ENCODE measurements at regions of chr16 and their contacts with region 1.

Region 1: DNA sequence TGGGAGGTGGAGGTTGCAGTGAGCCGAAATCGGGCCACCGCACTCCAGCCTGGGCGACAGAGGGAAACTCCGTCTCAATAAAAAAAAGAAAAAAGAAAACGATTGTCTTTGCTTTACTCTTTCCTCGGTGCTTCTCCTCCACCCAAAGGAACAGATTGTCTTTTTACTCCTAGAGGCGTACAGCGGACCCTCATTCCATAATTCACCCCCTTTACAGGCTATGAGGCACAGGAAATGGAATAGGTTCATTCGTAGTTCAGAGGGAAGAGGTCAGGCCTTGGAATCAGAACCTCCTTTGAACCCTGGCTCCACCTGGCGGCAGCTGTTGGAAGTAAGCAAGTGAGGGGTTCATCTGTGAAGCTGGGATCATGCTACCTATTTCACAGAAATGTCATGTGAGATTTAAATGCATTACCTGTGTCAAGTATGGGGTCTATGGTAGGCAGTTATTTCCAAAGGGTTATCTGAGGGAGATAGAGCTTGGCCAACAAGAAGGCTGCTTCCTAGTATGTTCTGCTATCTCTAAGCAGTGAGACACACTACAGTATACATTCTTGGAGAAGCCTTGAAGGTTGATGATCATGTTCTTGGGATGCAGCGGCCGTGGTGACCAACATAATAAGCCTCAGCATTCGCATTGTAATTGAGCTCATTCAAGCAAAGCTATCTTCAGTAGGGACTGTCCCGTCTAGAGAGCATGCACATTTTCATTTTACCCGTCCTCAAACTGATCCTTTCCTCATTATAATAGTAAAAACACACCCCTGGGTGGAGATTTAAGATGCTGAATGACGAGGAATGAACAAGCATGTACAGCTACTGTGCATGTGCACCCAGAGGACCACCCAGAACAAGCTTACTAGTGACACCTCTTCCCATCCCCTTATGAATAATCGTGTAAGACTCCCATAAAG is 18.7 kb upstream of the ZNF689 start:
- DNase-seq: peak in 1 of 2 experiments; percentile 98
- H3K4me3 ChIP-seq: no peak overlapping the region
- H3K27ac ChIP-seq: no peak overlapping the region
- H3K4me1 ChIP-seq: no peaks in the 10 kb centered on the region
- H3K27me3 ChIP-seq: no peaks in the 10 kb centered on the region
- CTCF ChIP-seq: peak; percentile 82 to 94 (median 84)
- EP300 ChIP-seq: no peak
- POLR2A ChIP-seq: no peak
- RAD21 ChIP-seq: peak; percentile 69 to 76

Region 2: DNA sequence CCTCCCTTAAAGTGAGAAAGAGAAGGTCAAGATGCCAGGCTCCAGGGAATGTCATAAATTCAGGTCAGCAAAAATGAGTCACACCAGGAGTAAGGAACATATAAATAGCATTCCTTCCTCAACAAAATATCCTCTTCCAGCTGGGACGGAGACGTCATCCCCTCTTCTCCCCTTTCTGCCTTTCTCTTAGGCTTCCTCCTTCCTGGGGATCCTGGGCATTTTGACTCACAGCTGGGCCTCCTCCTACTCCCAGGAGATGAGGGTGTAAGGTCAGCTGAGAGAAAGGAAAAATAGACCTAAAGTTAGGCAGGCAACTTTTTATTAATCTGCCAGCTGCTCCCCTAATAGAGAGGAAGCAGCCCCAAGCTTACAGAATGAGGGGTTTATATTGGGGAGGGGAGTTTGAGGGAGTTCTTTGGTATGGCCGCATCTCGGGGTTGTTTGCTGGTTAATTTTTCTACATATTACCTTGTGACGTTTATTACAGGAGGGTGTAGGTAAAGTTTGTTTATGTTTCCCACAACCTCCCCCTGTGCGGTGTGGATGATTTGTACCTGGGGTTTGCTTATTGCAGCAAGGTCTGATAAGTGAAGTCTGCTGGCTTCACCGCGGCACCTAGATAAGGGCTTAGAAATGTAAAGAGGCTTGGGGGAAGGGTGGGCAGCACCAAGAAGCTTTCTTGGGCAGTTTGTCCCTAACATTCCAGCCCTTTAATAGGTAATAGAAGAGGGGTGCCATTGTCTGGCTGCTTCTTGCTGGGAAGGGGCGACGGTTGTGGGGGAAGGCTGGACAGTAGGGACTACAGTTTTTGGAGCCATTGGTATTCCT is 87.2 kb before region 1 on chr16:
- CTCF ChIA-PET with region 1: interaction called, 10 read pairs
- POLR2A ChIA-PET with region 1: no interaction called
- DNase-seq: no peak
- H3K4me3 ChIP-seq: peak overlapping the region in 1 of 4 experiments; percentile 30; a peak in 2 of 8 replicates
- H3K27ac ChIP-seq: 0 out of 2 replicates have a peak overlapping the region, but pooled peaks have one; percentile 31
- H3K4me1 ChIP-seq: peaks cover 5 to 22% (median 19%) of the 10 kb centered on the region in 4 experiments
- H3K27me3 ChIP-seq: no peaks in the 10 kb centered on the region
- CTCF ChIP-seq: no peak
- EP300 ChIP-seq: no peak
- POLR2A ChIP-seq: no peak
- RAD21 ChIP-seq: no peak

Region 3: DNA sequence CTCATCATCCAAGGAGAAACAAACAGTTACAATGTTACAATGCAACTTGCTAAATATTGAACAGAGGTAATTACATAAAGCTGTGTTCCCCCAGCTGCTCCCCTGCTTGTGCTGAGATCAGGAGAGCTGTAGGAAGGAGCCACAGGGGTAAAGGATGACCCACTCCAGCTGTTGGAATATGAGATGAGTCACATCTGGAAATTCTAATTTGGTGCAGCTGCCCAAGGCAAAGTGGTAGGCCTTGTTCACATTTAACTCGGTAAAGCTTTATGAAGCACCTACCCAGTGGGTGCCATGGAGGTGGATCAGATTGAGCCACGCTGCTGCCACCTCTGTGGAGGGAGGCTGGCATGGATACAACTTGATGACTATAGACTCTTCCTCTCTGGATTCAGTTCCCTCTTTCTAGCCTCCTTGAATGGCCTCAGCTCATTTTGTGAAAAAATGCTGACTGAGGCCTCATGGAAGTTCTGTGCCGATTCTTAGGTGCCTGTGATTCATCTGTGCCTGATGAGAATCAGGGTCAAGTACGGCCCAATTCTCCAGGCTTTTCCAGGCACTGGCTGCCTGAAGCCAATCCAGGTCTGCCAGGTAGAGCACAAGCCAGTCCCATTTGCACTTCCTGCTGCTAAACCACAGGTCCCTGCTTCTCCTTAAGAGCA is 26.1 kb before region 1 on chr16:
- CTCF ChIA-PET with region 1: interaction called, 21 read pairs
- POLR2A ChIA-PET with region 1: interaction called, 3 read pairs
- DNase-seq: no peak
- H3K4me3 ChIP-seq: no peak overlapping the region
- H3K27ac ChIP-seq: no peak overlapping the region
- H3K4me1 ChIP-seq: no peaks in the 10 kb centered on the region
- H3K27me3 ChIP-seq: no peaks in the 10 kb centered on the region
- CTCF ChIP-seq: no peak
- EP300 ChIP-seq: no peak
- POLR2A ChIP-seq: no peak
- RAD21 ChIP-seq: no peak

Region 4: DNA sequence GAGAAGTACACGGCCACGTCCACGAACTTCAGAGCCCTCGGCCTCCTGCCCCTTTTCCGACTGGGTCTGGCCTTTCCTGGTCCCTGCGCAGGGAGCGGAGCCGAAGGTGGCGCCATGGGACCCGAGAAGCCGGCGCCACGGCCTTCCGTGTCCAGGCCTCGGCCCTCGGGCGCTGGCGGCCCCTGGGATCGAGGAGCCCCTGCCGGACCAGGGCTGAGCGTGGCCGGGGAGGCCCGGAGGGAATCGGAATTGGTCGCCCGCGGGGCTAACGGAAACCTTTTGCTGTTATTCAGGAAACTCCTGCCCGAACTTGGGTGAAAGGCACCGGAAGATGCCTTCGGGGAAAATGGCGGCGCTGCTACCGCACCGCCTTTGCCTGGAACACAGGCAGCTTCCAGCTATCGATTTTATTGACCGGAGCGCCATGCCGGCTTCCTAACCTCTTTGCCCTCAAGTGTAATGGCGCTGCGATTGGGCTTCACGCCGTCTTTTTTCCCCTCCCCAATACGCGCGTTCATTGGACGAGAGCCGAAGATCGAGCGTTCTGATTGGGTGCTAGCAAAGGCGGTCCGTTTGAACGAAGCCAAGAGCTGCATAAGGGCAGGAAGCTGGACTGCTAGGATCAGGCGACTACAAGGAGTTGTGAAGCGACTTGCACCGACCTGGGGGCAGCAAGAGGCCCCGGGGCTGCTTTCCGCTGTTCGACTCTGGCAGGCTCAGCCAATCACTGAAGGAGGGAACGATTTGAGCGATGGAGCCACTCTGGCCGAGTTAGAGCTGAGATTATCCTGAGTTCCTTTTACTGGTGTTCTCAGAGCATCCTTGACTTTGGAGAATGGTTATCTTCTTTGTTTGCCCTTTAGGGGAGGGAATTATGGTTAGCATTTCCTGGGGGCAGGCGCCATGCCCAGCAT is 18.7 kb before region 1 on chr16 and contains the start of gene ZNF689:
- CTCF ChIA-PET with region 1: interaction called, 74 read pairs
- POLR2A ChIA-PET with region 1: interaction called, 7 read pairs
- DNase-seq: peak; percentile 98 to 99
- H3K4me3 ChIP-seq: peak within 1 kb of the TSS; percentile 88 to 98 (median 92)
- H3K27ac ChIP-seq: peak within 1 kb of the TSS; percentile 95
- H3K4me1 ChIP-seq: peaks cover 0 to 3% (median 2%) of the 10 kb centered on the region in 4 experiments; a peak in 3 of 7 replicates
- H3K27me3 ChIP-seq: no peaks in the 10 kb centered on the region
- CTCF ChIP-seq: no peak
- EP300 ChIP-seq: no peak
- POLR2A ChIP-seq: peak; percentile 78 to 86
- RAD21 ChIP-seq: 0 out of 4 replicates have a peak, but pooled peaks of 1 of the 2 experiments have one; percentile 1
- total RNA-seq, gene ZNF689: 14.2 and 14.3 TPM in 2 replicates

Region 5: DNA sequence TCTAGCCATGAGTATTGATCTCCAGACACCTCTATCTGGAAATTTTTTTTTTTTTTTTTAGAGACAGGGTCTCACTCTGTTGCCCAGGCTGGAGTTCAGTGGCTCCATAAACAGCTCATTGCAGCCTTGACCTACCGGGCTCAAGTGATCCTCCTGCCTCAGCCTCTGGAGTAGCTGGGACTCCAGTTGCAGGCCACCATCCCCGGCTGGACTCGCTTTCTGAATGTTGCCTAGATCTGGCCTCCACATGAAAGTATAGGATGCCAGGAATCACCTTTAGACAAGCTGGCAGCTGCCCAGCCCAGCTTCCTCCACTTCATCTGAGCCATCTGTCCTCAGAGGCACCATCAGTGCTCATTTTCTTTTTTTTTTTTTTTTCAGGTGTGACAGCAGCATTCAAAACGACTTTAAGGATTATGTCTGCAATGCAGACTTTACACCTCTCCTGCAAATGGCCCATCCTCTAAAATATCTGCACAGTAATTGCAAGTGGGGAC is 15.5 kb after region 1 on chr16:
- CTCF ChIA-PET with region 1: interaction called, 12 read pairs
- POLR2A ChIA-PET with region 1: interaction called, 5 read pairs
- DNase-seq: no peak
- H3K4me3 ChIP-seq: no peak overlapping the region
- H3K27ac ChIP-seq: no peak overlapping the region
- H3K4me1 ChIP-seq: no peaks in the 10 kb centered on the region
- H3K27me3 ChIP-seq: peaks cover 0 to 8% (median 1%) of the 10 kb centered on the region in 4 experiments; a peak in 3 of 7 replicates
- CTCF ChIP-seq: no peak
- EP300 ChIP-seq: no peak
- POLR2A ChIP-seq: no peak
- RAD21 ChIP-seq: no peak

Measured in H1 (cell line).